Activated CD8-positive, alpha-beta T cell treated with anti-CD3 and anti-CD28 coated beads for 36 hours (primary cell): ENCODE measurements at regions of chr2 and their contacts with region 1.

Region 1: DNA sequence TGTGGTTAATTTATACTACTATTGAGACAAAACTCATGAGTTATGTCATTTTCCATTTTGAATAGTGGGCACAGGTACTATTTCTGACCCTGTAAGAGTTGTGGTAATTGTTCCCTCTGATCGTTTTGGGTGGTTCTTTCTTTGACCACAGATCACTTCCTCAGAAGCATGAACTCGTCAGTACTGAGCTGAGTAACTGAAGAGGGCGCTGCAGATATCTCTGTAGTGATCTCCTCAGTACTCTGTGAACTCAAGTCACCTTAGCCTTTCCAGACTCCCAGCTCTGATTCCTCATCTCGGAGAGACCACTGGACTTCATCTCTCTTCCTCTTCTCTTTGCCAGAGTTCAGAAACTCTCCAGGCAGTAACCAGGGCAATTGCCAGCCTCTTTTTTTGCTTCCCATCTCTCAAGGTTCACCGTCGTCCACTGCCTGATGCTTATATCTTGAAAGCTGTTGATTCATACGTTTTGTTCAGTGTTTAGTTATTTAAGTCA is 9.4 kb upstream of the IL1RL1 start:
- DNase-seq: peak; percentile 83
- ATAC-seq: peak; percentile 91
- H3K4me3 Mint-ChIP-seq: peak overlapping the region; percentile 56
- H3K27ac Mint-ChIP-seq: peak overlapping the region; percentile 86
- H3K4me1 Mint-ChIP-seq: peaks cover 52% of the 10 kb centered on the region
- H3K27me3 Mint-ChIP-seq: no peaks in the 10 kb centered on the region
- CTCF ChIP-seq: no peak

Region 2: GRCh38 chr2:102258386-102259074 is 43.4 kb before region 1 on chr2:
- CTCF ChIA-PET with region 1: interaction called, 14 read pairs
- POLR2A ChIA-PET with region 1: no interaction called
- intact Hi-C with region 1: loop called (anchors 5 kb)
- DNase-seq: peak; percentile 62
- ATAC-seq: peak; percentile 92
- H3K4me3 Mint-ChIP-seq: no peak overlapping the region
- H3K27ac Mint-ChIP-seq: peak overlapping the region; percentile 95
- H3K4me1 Mint-ChIP-seq: peaks cover 48% of the 10 kb centered on the region
- H3K27me3 Mint-ChIP-seq: no peaks in the 10 kb centered on the region
- CTCF ChIP-seq: no peak

Region 3: GRCh38 chr2:102291318-102292251 is 10.3 kb before region 1 on chr2:
- CTCF ChIA-PET with region 1: interaction called, 17 read pairs
- POLR2A ChIA-PET with region 1: interaction called, 3 read pairs
- intact Hi-C with region 1: no loop called
- DNase-seq: no peak
- ATAC-seq: no peak
- H3K4me3 Mint-ChIP-seq: no peak overlapping the region
- H3K27ac Mint-ChIP-seq: no peak overlapping the region
- H3K4me1 Mint-ChIP-seq: peaks cover 34% of the 10 kb centered on the region
- H3K27me3 Mint-ChIP-seq: peaks cover 3% of the 10 kb centered on the region
- CTCF ChIP-seq: no peak

Region 4: GRCh38 chr2:102366406-102367112 is 64.6 kb after region 1 on chr2:
- CTCF ChIA-PET with region 1: interaction called, 3 read pairs
- POLR2A ChIA-PET with region 1: interaction called, 3 read pairs
- intact Hi-C with region 1: loop called (anchors 5 kb)
- DNase-seq: peak; percentile 41
- ATAC-seq: peak; percentile 52
- H3K4me3 Mint-ChIP-seq: peak overlapping the region; percentile 51
- H3K27ac Mint-ChIP-seq: peak overlapping the region; percentile 96
- H3K4me1 Mint-ChIP-seq: peaks cover 88% of the 10 kb centered on the region
- H3K27me3 Mint-ChIP-seq: no peaks in the 10 kb centered on the region
- CTCF ChIP-seq: no peak

Region 5: GRCh38 chr2:102436323-102436722 is 134.4 kb after region 1 on chr2:
- CTCF ChIA-PET with region 1: interaction called, 3 read pairs
- POLR2A ChIA-PET with region 1: interaction called, 4 read pairs
- intact Hi-C with region 1: loop called (anchors 2 kb)
- DNase-seq: peak; percentile 28
- ATAC-seq: no peak
- H3K4me3 Mint-ChIP-seq: peak overlapping the region; percentile 23
- H3K27ac Mint-ChIP-seq: peak overlapping the region; percentile 81
- H3K4me1 Mint-ChIP-seq: peaks cover 48% of the 10 kb centered on the region
- H3K27me3 Mint-ChIP-seq: no peaks in the 10 kb centered on the region
- CTCF ChIP-seq: no peak

Region 6: DNA sequence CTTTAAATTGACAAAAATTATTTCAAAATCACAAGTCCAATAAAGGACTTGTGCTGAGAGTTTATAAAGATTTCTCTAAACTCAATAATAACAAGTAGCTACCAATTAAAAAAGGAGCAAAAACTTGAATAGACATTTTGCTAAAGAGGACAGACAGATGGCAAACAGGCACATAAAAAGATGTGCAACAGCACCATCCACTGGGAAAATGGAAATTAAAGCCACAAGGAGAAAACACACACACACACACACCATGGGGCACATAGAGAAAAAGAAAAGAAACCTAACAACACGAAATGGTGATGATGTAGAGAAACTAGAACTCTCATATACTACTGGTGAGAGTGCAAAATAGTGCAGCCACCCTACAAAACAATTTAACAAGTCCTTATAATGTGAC is 158.6 kb after region 1 on chr2:
- CTCF ChIA-PET with region 1: no interaction called
- POLR2A ChIA-PET with region 1: no interaction called
- intact Hi-C with region 1: no loop called
- DNase-seq: no peak
- ATAC-seq: no peak
- H3K4me3 Mint-ChIP-seq: no peak overlapping the region
- H3K27ac Mint-ChIP-seq: no peak overlapping the region
- H3K4me1 Mint-ChIP-seq: no peaks in the 10 kb centered on the region
- H3K27me3 Mint-ChIP-seq: peaks cover 7% of the 10 kb centered on the region
- CTCF ChIP-seq: no peak